Mammary epithelial cell (primary cell): ENCODE measurements at regions of chr4 and their contacts with region 1.

Region 1: DNA sequence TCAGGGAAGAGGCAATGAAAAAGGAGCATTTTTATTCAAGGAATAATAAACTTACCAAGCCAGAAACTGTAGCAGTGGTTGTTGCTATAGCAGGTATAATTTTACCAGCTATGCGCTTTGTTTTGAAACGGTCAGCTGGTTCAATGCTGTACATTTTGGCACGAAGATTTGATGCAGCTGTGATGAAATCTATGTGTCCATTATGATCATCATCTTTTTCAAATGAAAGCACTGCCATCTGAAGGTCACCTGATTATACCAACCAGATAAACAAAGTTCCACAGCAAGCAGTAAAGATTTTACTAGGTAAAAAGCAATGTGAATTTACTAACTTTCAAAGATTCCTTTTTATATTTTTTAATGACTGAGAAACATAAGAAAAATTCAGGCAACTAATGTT is 66.4 kb downstream of the STAP1 start:
- DNase-seq: no peak
- H3K4me3 ChIP-seq: no peak overlapping the region
- H3K27ac ChIP-seq: no peak overlapping the region
- H3K4me1 ChIP-seq: no peaks in the 10 kb centered on the region
- H3K27me3 ChIP-seq: no peaks in the 10 kb centered on the region
- CTCF ChIP-seq: no peak

Region 2: GRCh38 chr4:67674096-67674495 is 49.2 kb after region 1 on chr4:
- CTCF ChIA-PET with region 1: no interaction called
- dilution Hi-C with region 1: no loop called
- in situ Hi-C with region 1: no loop called
- intact Hi-C with region 1: loop called (anchors 5 kb)
- DNase-seq: no peak
- H3K4me3 ChIP-seq: no peak overlapping the region
- H3K27ac ChIP-seq: no peak overlapping the region
- H3K4me1 ChIP-seq: no peaks in the 10 kb centered on the region
- H3K27me3 ChIP-seq: no peaks in the 10 kb centered on the region
- CTCF ChIP-seq: peak in 1 of 2 donors; percentile 4

Region 3: DNA sequence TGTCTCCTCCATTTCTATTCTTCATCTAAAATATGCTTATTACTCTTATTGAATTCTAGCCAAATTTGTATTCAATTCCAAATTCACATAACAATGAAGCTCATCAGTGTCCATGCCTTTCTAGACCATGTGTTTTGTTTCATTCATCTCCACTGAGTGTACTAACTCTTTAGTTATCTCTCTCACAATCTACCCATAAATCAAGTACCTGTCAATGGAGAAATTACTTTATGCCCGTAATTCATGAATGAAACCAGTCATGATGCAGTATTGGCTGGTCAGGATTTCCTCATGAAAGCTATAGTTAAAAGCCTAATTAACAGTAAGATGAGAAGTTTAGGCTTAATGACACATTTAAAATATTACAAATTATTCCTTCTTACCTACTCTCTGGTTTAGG is 516.9 kb after region 1 on chr4:
- CTCF ChIA-PET with region 1: no interaction called
- dilution Hi-C with region 1: no loop called
- in situ Hi-C with region 1: no loop called
- intact Hi-C with region 1: no loop called
- DNase-seq: peak; percentile 9
- H3K4me3 ChIP-seq: no peak overlapping the region
- H3K27ac ChIP-seq: no peak overlapping the region
- H3K4me1 ChIP-seq: no peaks in the 10 kb centered on the region
- H3K27me3 ChIP-seq: no peaks in the 10 kb centered on the region
- CTCF ChIP-seq: no peak